CD4-positive, alpha-beta T cell (primary cell): ENCODE measurements at regions of chr12 and their contacts with region 1.

Region 1: GRCh38 chr12:53379389-53380103 is 430 bp upstream of the SP1 start:
- DNase-seq: peak in 12 of 14 experiments; percentile 80 to 100 (median 92)
- ATAC-seq: peak; percentile 76
- H3K4me3 ChIP-seq: peak overlapping the region; percentile 63
- H3K4me3 Mint-ChIP-seq: no peak overlapping the region
- H3K27ac ChIP-seq: peak overlapping the region; percentile 67 to 75
- H3K27ac Mint-ChIP-seq: no peak overlapping the region
- H3K4me1 ChIP-seq: peaks cover 52% of the 10 kb centered on the region
- H3K4me1 Mint-ChIP-seq: peaks cover 31% of the 10 kb centered on the region
- H3K27me3 ChIP-seq: no peaks in the 10 kb centered on the region
- H3K27me3 Mint-ChIP-seq: no peaks in the 10 kb centered on the region
- CTCF ChIP-seq: no peak

Region 2: GRCh38 chr12:53344824-53345485 is 34.6 kb before region 1 on chr12:
- CTCF ChIA-PET with region 1: interaction called, 6 read pairs
- POLR2A ChIA-PET with region 1: interaction called, 24 read pairs
- intact Hi-C with region 1: no loop called
- DNase-seq: peak; percentile 51 to 85 (median 65)
- ATAC-seq: peak; percentile 80
- H3K4me3 ChIP-seq: peak overlapping the region; percentile 66
- H3K4me3 Mint-ChIP-seq: peak overlapping the region; percentile 93
- H3K27ac ChIP-seq: no peak overlapping the region
- H3K27ac Mint-ChIP-seq: peak overlapping the region; percentile 72
- H3K4me1 ChIP-seq: peaks cover 15% of the 10 kb centered on the region
- H3K4me1 Mint-ChIP-seq: peaks cover 21% of the 10 kb centered on the region
- H3K27me3 ChIP-seq: peaks cover 2 to 3% of the 10 kb centered on the region in 2 experiments
- H3K27me3 Mint-ChIP-seq: peaks cover 3% of the 10 kb centered on the region
- CTCF ChIP-seq: peak; percentile 81

Region 3: GRCh38 chr12:53365245-53365904 is 14.2 kb before region 1 on chr12:
- CTCF ChIA-PET with region 1: interaction called, 3 read pairs
- POLR2A ChIA-PET with region 1: interaction called, 18 read pairs
- intact Hi-C with region 1: no loop called
- DNase-seq: peak in 2 of 14 experiments; percentile 30 to 46
- ATAC-seq: no peak
- H3K4me3 ChIP-seq: no peak overlapping the region
- H3K4me3 Mint-ChIP-seq: no peak overlapping the region
- H3K27ac ChIP-seq: no peak overlapping the region
- H3K27ac Mint-ChIP-seq: no peak overlapping the region
- H3K4me1 ChIP-seq: peaks cover 34% of the 10 kb centered on the region
- H3K4me1 Mint-ChIP-seq: peaks cover 16% of the 10 kb centered on the region
- H3K27me3 ChIP-seq: no peaks in the 10 kb centered on the region
- H3K27me3 Mint-ChIP-seq: no peaks in the 10 kb centered on the region
- CTCF ChIP-seq: no peak

Region 4: GRCh38 chr12:53427905-53428594 is 48.5 kb after region 1 on chr12:
- CTCF ChIA-PET with region 1: interaction called, 30 read pairs
- POLR2A ChIA-PET with region 1: no interaction called
- intact Hi-C with region 1: loop called in 1 of 2 experiments (anchors 5 kb)
- DNase-seq: peak in 1 of 14 experiments; percentile 13
- ATAC-seq: no peak
- H3K4me3 ChIP-seq: no peak overlapping the region
- H3K4me3 Mint-ChIP-seq: no peak overlapping the region
- H3K27ac ChIP-seq: no peak overlapping the region
- H3K27ac Mint-ChIP-seq: no peak overlapping the region
- H3K4me1 ChIP-seq: no peaks in the 10 kb centered on the region
- H3K4me1 Mint-ChIP-seq: no peaks in the 10 kb centered on the region
- H3K27me3 ChIP-seq: no peaks in the 10 kb centered on the region
- H3K27me3 Mint-ChIP-seq: no peaks in the 10 kb centered on the region
- CTCF ChIP-seq: no peak

Region 5: DNA sequence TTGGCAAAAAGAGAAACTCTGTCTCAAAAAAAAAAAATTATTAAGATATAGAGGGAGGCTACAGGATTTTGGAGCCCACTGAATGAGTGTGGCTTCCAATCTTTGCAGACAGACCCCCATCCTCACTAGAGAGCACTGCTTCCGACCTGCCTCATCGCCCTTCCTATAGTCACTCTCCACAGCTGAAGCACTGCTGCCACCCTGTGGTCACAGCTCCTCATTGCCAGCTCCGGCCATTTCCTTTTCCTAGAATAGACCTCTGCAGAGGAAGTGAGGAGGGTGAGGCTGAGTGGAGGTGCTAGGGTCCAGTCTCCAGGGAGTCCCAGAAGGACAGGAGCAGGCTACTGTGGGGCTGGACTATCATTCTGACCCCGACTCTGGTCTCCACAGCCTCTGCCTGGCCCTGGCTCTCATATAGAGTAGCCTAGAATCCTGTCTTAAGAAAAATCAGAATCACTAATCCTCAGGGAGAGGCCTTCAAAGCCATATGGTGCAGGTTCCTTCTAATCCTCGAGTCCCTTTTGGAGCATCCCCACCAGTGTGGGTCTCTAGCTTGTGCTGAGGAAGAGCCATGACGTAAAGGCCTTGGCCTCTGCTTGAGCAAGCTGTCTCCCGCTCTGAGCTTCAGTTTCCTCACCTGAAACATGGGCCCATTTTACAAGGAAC is 129.1 kb after region 1 on chr12:
- CTCF ChIA-PET with region 1: interaction called, 8 read pairs
- POLR2A ChIA-PET with region 1: interaction called, 11 read pairs
- intact Hi-C with region 1: loop called in 1 of 2 experiments (anchors 2 kb)
- DNase-seq: peak; percentile 69 to 88 (median 78)
- ATAC-seq: peak; percentile 99
- H3K4me3 ChIP-seq: no peak overlapping the region
- H3K4me3 Mint-ChIP-seq: no peak overlapping the region
- H3K27ac ChIP-seq: no peak overlapping the region
- H3K27ac Mint-ChIP-seq: peak overlapping the region; percentile 52
- H3K4me1 ChIP-seq: peaks cover 9% of the 10 kb centered on the region
- H3K4me1 Mint-ChIP-seq: peaks cover 6% of the 10 kb centered on the region
- H3K27me3 ChIP-seq: no peaks in the 10 kb centered on the region
- H3K27me3 Mint-ChIP-seq: no peaks in the 10 kb centered on the region
- CTCF ChIP-seq: peak; percentile 87